BJ (cell line): ENCODE measurements at regions of chr1 and their contacts with region 1.

Region 1: DNA sequence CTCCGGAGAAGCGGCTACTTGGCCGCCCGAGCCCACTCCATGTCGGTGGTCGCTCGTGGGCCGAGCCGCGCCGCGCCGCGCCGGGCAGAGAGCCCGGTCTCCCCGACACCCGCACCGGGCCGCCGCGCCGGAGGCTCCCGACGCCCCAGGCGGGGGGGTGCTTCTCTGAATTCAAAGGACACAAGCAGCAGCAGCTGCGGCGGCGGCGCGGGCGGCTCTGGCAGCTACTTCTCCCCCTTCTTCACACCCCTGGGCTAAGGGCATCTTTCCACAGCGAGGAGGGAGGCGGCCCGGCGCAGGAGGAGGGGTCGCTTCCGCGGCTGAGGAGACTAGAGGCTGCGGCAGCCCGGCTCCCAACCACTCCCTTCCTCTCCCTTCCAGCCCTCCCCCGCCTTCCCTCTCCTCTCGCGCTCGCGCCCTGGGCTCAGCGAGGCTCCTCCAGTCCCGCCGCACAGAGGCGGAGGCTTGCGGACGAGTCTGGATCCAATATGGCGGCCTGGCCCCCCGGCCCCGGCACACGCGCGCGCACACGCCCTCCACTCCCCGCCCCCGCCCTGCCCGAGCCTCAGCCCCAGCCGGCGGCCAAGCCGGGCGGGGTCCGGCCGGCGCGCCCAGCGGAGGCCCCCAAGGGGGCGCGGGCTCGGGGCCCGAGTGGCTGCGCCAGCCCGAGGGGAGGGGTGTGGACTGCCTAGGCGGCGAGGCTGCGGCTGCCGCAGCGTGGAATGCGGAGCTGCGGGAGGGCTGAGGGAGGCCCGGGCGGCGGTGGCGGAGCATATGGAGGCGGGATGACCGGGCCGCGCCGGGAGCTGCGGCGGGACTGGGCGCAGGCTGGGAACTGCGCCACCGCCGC is at the start of gene CDC42BPA:
- DNase-seq: peak; percentile 62
- H3K4me3 ChIP-seq: peak within 1 kb of the TSS; percentile 60
- H3K27me3 ChIP-seq: no peaks in the 10 kb centered on the region
- CTCF ChIP-seq: no peak
- polyA plus RNA-seq, gene CDC42BPA: 17.9 and 24.8 TPM in 2 replicates

Region 2: DNA sequence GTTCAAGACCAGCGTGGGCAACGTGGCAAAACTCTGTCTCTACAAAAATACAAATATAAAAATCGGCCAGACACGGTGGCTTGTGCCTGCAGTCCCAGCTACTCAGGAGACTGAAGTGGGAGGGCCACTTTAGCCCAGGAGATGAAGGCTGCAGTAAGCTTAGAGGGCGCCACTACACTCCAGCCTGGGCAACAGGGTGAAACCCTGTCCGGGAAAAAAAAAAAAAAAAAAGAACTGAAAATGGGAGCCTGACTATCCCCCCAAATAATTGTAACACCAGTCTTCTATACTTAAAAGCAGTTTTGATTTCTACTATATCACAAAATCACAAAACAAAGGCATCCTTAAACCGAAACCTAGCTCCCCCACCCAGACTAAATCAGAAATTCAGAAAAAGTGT is 60.3 kb before region 1 on chr1:
- CTCF ChIA-PET with region 1: no interaction called
- POLR2A ChIA-PET with region 1: no interaction called
- DNase-seq: no peak
- H3K4me3 ChIP-seq: no peak overlapping the region
- H3K27me3 ChIP-seq: no peaks in the 10 kb centered on the region
- CTCF ChIP-seq: no peak

Region 3: GRCh38 chr1:227328405-227329019 is 10.3 kb after region 1 on chr1:
- CTCF ChIA-PET with region 1: interaction called, 10 read pairs
- POLR2A ChIA-PET with region 1: no interaction called
- DNase-seq: no peak
- H3K4me3 ChIP-seq: no peak overlapping the region
- H3K27me3 ChIP-seq: no peaks in the 10 kb centered on the region
- CTCF ChIP-seq: no peak